Naive thymus-derived CD4-positive, alpha-beta T cell (primary cell): ENCODE measurements at regions of chr20 and their contacts with region 1.

Region 1: GRCh38 chr20:63782051-63782471 is 42.5 kb downstream of the SLC2A4RG start:
- DNase-seq: peak in 6 of 9 donors; percentile 60 to 74 (median 64)
- ATAC-seq: peak; percentile 95
- H3K4me3 ChIP-seq: no peak overlapping the region
- H3K4me3 Mint-ChIP-seq: peak overlapping the region in 8 of 10 donors; percentile 31 to 78 (median 48)
- H3K27ac ChIP-seq: no peak overlapping the region
- H3K27ac Mint-ChIP-seq: peak overlapping the region in 6 of 9 donors; percentile 55 to 92 (median 64)
- H3K4me1 ChIP-seq: peaks cover 8 to 9% of the 10 kb centered on the region in 2 donors
- H3K4me1 Mint-ChIP-seq: peaks cover 9 to 24% (median 18%) of the 10 kb centered on the region in 7 donors
- H3K27me3 ChIP-seq: no peaks in the 10 kb centered on the region
- H3K27me3 Mint-ChIP-seq: no peaks in the 10 kb centered on the region

Region 2: GRCh38 chr20:63328026-63328700 is 453.9 kb before region 1 on chr20:
- CTCF ChIA-PET with region 1: interaction called, 11 read pairs
- POLR2A ChIA-PET with region 1: no interaction called
- intact Hi-C with region 1: no loop called
- DNase-seq: no peak
- ATAC-seq: peak; percentile 12
- H3K4me3 ChIP-seq: no peak overlapping the region
- H3K4me3 Mint-ChIP-seq: no peak overlapping the region
- H3K27ac ChIP-seq: no peak overlapping the region
- H3K27ac Mint-ChIP-seq: peak overlapping the region in 6 of 9 donors; percentile 10 to 78 (median 44)
- H3K4me1 ChIP-seq: peaks cover 7 to 13% of the 10 kb centered on the region in 2 donors
- H3K4me1 Mint-ChIP-seq: peaks cover 0 to 11% (median 4%) of the 10 kb centered on the region in 7 donors
- H3K27me3 ChIP-seq: no peaks in the 10 kb centered on the region
- H3K27me3 Mint-ChIP-seq: peaks cover 2 to 13% (median 7%) of the 10 kb centered on the region in 5 donors

Region 3: GRCh38 chr20:63580796-63581461 is 201.1 kb before region 1 on chr20:
- CTCF ChIA-PET with region 1: no interaction called
- POLR2A ChIA-PET with region 1: no interaction called
- intact Hi-C with region 1: loop called in 1 of 2 experiments (anchors 1 kb)
- DNase-seq: peak; percentile 30 to 87 (median 81)
- ATAC-seq: peak; percentile 96
- H3K4me3 ChIP-seq: no peak overlapping the region
- H3K4me3 Mint-ChIP-seq: peak overlapping the region in 1 of 10 donors; percentile 17
- H3K27ac ChIP-seq: no peak overlapping the region
- H3K27ac Mint-ChIP-seq: peak overlapping the region in 1 of 9 donors; percentile 74
- H3K4me1 ChIP-seq: peaks cover 0 to 10% of the 10 kb centered on the region in 2 donors
- H3K4me1 Mint-ChIP-seq: peaks cover 0 to 17% (median 14%) of the 10 kb centered on the region in 7 donors
- H3K27me3 ChIP-seq: no peaks in the 10 kb centered on the region
- H3K27me3 Mint-ChIP-seq: peaks cover 0 to 42% (median 0%) of the 10 kb centered on the region in 5 donors

Region 4: DNA sequence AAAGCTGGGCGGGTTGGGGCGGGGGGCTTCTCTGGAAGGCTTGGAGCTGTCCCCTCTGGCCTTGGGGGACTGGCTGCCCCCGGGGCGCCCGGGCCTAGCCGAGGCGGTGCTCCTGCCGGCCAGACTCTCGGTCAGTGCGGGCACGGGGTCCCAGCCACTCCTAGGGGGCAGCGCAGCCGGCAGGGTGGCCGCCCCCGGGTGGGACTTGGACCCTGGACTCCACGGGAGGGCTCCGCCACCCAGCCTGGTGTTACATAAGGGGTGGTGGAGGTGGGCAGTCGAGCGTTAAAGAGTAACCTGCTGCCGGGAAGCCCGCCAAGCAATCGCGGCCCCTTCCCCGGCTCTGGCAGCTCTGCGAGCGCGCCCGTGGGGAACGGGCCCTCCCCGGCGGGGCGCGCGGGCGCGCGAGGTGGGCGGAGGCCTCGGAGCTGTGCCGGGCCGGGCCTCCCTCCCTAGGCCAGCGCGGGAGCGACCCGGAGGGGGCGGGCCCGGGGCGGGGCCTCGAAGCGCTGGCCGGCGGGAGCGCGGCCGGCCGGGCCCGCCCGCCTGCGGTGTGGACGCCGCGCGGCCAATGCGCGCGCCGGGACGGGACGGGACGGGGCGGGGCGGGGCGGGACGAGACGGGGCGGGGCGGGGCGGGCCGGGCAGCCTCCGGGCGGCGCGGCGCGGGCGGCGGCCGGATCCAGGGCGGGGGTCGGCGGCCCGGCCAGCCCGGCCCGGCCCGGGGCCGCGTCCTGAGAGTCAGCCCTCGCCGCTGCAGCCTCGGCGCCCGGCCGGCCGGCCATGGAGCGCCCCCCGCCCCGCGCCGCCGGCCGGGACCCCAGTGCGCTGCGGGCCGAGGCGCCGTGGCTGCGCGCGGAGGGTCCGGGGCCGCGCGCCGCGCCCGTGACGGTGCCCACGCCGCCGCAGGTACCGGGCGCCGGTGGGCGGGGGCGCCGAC is 42.7 kb before region 1 on chr20 and contains the start of gene SLC2A4RG:
- CTCF ChIA-PET with region 1: interaction called, 3 read pairs
- POLR2A ChIA-PET with region 1: interaction called, 3 read pairs
- intact Hi-C with region 1: loop called in 1 of 2 experiments (anchors 1 kb)
- DNase-seq: peak; percentile 49 to 86 (median 69)
- ATAC-seq: peak; percentile 62
- H3K4me3 ChIP-seq: peak within 1 kb of the TSS; percentile 99
- H3K4me3 Mint-ChIP-seq: peak within 1 kb of the TSS; percentile 33 to 92 (median 80)
- H3K27ac ChIP-seq: peak within 1 kb of the TSS; percentile 71
- H3K27ac Mint-ChIP-seq: peak within 1 kb of the TSS in 1 of 9 donors; percentile 38
- H3K4me1 ChIP-seq: peaks cover 21 to 29% of the 10 kb centered on the region in 2 donors
- H3K4me1 Mint-ChIP-seq: peaks cover 7 to 20% (median 16%) of the 10 kb centered on the region in 7 donors
- H3K27me3 ChIP-seq: no peaks in the 10 kb centered on the region
- H3K27me3 Mint-ChIP-seq: no peaks in the 10 kb centered on the region
- total RNA-seq, gene SLC2A4RG: 88.7 to 136 (median 111) TPM

Region 5: DNA sequence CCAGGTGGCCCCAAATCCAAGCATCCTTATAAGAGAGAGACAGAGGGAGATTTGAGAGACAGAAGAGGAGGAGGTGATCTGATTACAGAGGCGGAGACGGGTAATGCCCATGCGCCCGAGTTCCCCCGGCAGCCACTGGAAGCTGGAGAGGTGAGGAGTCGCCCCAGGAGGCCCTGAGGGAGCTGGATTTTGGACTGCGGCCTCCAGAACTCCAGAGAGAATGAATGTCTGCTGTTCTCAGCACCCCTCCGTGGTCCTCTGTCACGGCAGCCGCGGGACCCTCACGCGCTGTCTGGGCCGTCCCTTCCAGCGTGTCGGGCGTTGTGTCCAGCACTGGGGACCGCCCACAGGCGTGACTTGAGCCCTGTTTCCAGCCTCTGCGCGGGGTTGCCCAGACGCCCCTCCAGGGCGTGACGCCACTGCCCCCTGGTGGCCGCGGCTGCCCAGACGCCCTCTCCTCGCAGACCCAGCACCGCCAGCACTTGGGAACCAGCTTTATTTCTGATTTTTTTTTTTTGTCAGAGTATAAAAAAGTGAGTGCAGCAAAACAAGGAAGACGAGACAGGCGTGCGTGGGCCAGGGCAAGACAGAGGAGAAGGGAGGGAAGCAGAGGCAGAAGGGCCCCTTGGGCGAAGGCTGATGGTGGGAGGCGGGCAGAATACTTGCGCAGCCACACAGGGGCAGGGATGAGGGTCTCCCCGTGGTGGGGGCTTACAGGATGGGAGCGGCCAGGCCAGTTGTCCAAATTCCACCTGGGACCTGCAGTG is 191.8 kb after region 1 on chr20:
- CTCF ChIA-PET with region 1: interaction called, 5 read pairs
- POLR2A ChIA-PET with region 1: interaction called, 3 read pairs
- intact Hi-C with region 1: loop called (anchors 1 kb)
- DNase-seq: peak; percentile 59 to 89 (median 78)
- ATAC-seq: peak; percentile 81
- H3K4me3 ChIP-seq: no peak overlapping the region
- H3K4me3 Mint-ChIP-seq: peak overlapping the region in 5 of 10 donors; percentile 7 to 71 (median 36)
- H3K27ac ChIP-seq: peak overlapping the region; percentile 35
- H3K27ac Mint-ChIP-seq: peak overlapping the region; percentile 16 to 88 (median 71)
- H3K4me1 ChIP-seq: peaks cover 16 to 36% of the 10 kb centered on the region in 2 donors
- H3K4me1 Mint-ChIP-seq: peaks cover 34 to 63% (median 54%) of the 10 kb centered on the region in 7 donors
- H3K27me3 ChIP-seq: no peaks in the 10 kb centered on the region
- H3K27me3 Mint-ChIP-seq: peaks cover 0 to 2% (median 0%) of the 10 kb centered on the region in 5 donors

Region 6: GRCh38 chr20:64062596-64063388 is 280.7 kb after region 1 on chr20 and contains the start of gene TCEA2:
- CTCF ChIA-PET with region 1: no interaction called
- POLR2A ChIA-PET with region 1: no interaction called
- intact Hi-C with region 1: loop called in 1 of 2 experiments (anchors 1 kb)
- DNase-seq: peak; percentile 85 to 95 (median 90)
- ATAC-seq: peak; percentile 97
- H3K4me3 ChIP-seq: peak within 1 kb of the TSS; percentile 56
- H3K4me3 Mint-ChIP-seq: peak within 1 kb of the TSS; percentile 83 to 95 (median 88)
- H3K27ac ChIP-seq: peak within 1 kb of the TSS; percentile 74
- H3K27ac Mint-ChIP-seq: peak within 1 kb of the TSS; percentile 69 to 95 (median 79)
- H3K4me1 ChIP-seq: peaks cover 23 to 40% of the 10 kb centered on the region in 2 donors
- H3K4me1 Mint-ChIP-seq: peaks cover 30 to 54% (median 37%) of the 10 kb centered on the region in 7 donors
- H3K27me3 ChIP-seq: no peaks in the 10 kb centered on the region
- H3K27me3 Mint-ChIP-seq: no peaks in the 10 kb centered on the region
- total RNA-seq, gene TCEA2: 35.5 to 73.2 (median 47.3) TPM

Region 7: DNA sequence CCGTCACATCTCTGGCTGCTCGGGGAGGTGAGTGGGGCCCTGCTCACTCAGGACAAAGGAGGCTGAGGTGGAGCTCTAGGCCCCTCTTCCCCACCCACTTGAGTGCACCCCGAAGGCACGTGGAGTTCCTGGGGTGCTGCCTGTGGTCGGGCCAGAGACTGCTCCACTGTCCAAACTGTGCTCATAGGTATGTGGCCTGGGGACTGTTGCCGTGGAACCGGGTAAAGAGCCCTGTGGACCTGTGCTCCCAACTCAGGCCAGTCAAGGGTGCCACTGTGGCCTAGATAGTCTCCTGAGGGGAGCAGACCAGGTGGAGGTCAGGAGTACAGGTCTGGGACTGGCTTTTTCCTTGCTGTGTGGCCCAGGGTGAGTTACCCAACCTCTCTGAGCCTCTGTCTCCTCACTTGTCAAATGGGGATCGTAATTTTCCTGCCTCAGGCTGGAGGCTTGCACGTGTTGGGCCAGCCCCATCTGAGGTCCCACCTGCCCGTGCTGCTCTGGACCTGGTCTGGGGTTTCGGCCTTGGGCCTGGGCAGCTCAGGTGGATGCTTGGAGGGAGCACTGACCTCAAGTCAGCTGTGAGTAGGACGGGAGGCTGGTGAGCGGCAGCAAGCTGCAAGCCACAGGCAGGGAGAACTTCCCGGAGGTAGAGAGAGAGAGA is 337.8 kb after region 1 on chr20:
- CTCF ChIA-PET with region 1: no interaction called
- POLR2A ChIA-PET with region 1: no interaction called
- intact Hi-C with region 1: loop called in 1 of 2 experiments (anchors 1 kb)
- DNase-seq: peak in 3 of 9 donors; percentile 2 to 24 (median 14)
- ATAC-seq: peak; percentile 18
- H3K4me3 ChIP-seq: peak overlapping the region; percentile 36
- H3K4me3 Mint-ChIP-seq: peak overlapping the region; percentile 39 to 80 (median 73)
- H3K27ac ChIP-seq: peak overlapping the region; percentile 22
- H3K27ac Mint-ChIP-seq: peak overlapping the region; percentile 69 to 85 (median 78)
- H3K4me1 ChIP-seq: peaks cover 5 to 9% of the 10 kb centered on the region in 2 donors
- H3K4me1 Mint-ChIP-seq: peaks cover 0 to 10% (median 8%) of the 10 kb centered on the region in 7 donors
- H3K27me3 ChIP-seq: no peaks in the 10 kb centered on the region
- H3K27me3 Mint-ChIP-seq: peaks cover 0 to 28% (median 0%) of the 10 kb centered on the region in 5 donors